Activated CD4-positive, alpha-beta T cell treated with anti-CD3 and anti-CD28 coated beads, Interleukin-2, amount 10 ng/mL, durations not matched to agents 7 days and 5 days (primary cell): ENCODE measurements at regions of chr10 and their contacts with region 1.

Region 1: DNA sequence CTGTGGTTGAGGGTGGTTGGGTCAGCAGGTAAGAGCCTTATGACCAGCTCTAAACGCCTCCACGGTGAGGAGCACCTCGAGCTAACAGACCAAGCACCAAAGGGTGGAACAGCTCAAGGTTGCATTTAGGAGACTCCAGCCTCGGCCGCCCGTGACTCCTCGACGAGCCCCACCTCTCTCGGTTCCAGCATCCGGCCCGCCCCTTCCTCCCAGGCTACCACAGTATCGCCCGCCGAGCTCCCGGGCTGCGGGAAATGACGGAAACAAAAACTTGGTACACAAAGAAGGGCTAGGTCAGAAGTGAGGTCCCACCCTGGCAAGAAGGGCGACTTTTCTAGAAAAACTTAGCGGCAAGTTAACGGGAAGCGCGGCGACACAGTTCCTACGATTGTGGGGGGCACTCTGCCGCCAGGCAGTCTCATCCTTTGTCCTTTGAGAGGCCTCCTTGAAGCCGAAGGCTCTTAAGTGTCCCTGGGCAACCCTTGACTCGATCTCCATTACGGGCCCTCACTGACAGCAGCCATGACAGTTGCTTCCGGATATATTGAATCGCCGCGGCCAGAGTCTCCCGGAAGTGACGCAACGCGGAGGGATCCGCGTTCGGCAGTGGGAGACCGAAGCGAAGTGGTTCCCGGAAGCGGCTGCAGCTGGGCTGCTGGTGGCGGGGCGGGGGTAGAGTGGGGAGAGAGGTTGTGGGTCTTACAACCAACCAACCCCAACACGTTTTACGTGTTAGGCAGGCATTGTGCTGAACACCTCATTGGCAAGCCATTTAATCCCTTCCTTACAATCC is 40.2 kb upstream of the ZNF518A start:
- DNase-seq: peak; percentile 93
- H3K4me3 Mint-ChIP-seq: peak overlapping the region; percentile 94
- H3K27ac Mint-ChIP-seq: peak overlapping the region; percentile 98
- H3K4me1 Mint-ChIP-seq: peaks cover 10% of the 10 kb centered on the region
- H3K27me3 Mint-ChIP-seq: peaks cover 18% of the 10 kb centered on the region

Region 2: GRCh38 chr10:95601116-95601719 is 488.6 kb before region 1 on chr10:
- CTCF ChIA-PET with region 1: no interaction called
- POLR2A ChIA-PET with region 1: no interaction called
- DNase-seq: peak; percentile 53
- H3K4me3 Mint-ChIP-seq: no peak overlapping the region
- H3K27ac Mint-ChIP-seq: no peak overlapping the region
- H3K4me1 Mint-ChIP-seq: no peaks in the 10 kb centered on the region
- H3K27me3 Mint-ChIP-seq: peaks cover 11% of the 10 kb centered on the region

Region 3: DNA sequence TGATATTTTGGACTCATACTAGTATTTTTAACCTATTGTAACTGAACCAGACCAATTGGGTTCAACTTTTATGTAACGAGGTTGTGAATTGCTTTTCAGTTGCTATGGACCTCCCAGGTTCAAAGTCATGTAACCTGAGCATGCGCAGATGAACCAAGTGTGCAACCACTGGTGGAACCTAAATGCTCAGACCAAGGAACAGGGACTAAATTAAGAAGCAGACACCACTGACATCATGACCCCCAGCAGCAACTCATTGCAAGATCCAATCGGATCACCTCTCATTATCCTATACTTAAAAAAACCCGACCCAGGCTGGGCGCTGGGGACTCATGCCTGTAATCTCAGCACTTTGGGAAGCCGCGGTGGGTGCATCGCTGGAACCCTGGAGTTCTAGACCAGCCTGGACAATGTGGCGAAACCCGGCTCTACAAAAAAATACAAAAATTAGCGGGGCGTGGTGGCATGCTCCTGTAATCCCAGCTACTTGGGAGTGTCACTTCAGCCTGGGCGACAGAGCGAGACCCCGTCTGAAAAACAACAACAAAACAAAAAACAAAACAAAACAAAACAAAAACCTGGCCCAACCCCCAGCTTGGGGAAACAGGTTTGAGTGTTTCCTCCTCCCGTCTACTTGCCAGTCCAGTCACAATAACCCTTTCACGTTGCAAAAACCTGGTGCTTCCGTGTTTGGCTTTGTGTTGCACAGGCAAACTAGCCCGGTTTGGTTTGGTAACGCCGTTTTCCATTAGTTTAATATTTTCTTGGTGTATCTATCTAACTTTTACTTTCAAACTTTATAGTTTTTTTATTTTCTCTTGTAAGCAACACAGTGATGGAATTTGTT is 29.0 kb after region 1 on chr10:
- CTCF ChIA-PET with region 1: no interaction called
- POLR2A ChIA-PET with region 1: no interaction called
- DNase-seq: no peak
- H3K4me3 Mint-ChIP-seq: no peak overlapping the region
- H3K27ac Mint-ChIP-seq: no peak overlapping the region
- H3K4me1 Mint-ChIP-seq: no peaks in the 10 kb centered on the region
- H3K27me3 Mint-ChIP-seq: peaks cover 45% of the 10 kb centered on the region

Region 4: GRCh38 chr10:96129387-96130325 is 39.8 kb after region 1 on chr10 and contains the start of gene ZNF518A:
- CTCF ChIA-PET with region 1: interaction called, 7 read pairs
- POLR2A ChIA-PET with region 1: interaction called, 23 read pairs
- DNase-seq: peak; percentile 92
- H3K4me3 Mint-ChIP-seq: peak within 1 kb of the TSS; percentile 87
- H3K27ac Mint-ChIP-seq: peak within 1 kb of the TSS; percentile 99
- H3K4me1 Mint-ChIP-seq: peaks cover 28% of the 10 kb centered on the region
- H3K27me3 Mint-ChIP-seq: peaks cover 32% of the 10 kb centered on the region
- total RNA-seq, gene ZNF518A: 17.8 to 18.9 TPM

Region 5: GRCh38 chr10:96153070-96153469 is 63.2 kb after region 1 on chr10:
- CTCF ChIA-PET with region 1: no interaction called
- POLR2A ChIA-PET with region 1: no interaction called
- DNase-seq: no peak
- H3K4me3 Mint-ChIP-seq: no peak overlapping the region
- H3K27ac Mint-ChIP-seq: no peak overlapping the region
- H3K4me1 Mint-ChIP-seq: no peaks in the 10 kb centered on the region
- H3K27me3 Mint-ChIP-seq: no peaks in the 10 kb centered on the region